CD4-positive, alpha-beta memory T cell (primary cell): ENCODE measurements at regions of chr17 and their contacts with region 1.

Region 1: GRCh38 chr17:19377602-19378392 is 501 bp upstream of the MAPK7 start:
- DNase-seq: peak; percentile 94 to 96 (median 95)
- H3K4me3 ChIP-seq: peak overlapping the region; percentile 96 to 98
- H3K4me3 Mint-ChIP-seq: peak overlapping the region; percentile 94 to 100 (median 99)
- H3K27ac ChIP-seq: peak overlapping the region; percentile 91
- H3K27ac Mint-ChIP-seq: peak overlapping the region; percentile 91 to 99 (median 98)
- H3K4me1 ChIP-seq: peaks cover 19% of the 10 kb centered on the region
- H3K4me1 Mint-ChIP-seq: peaks cover 12 to 49% (median 18%) of the 10 kb centered on the region in 4 donors
- H3K27me3 ChIP-seq: no peaks in the 10 kb centered on the region
- H3K27me3 Mint-ChIP-seq: no peaks in the 10 kb centered on the region

Region 2: GRCh38 chr17:19418251-19418992 is 40.6 kb after region 1 on chr17:
- CTCF ChIA-PET with region 1: no interaction called
- POLR2A ChIA-PET with region 1: no interaction called
- intact Hi-C with region 1: no loop called
- DNase-seq: peak in 2 of 5 donors; percentile 6 to 12
- H3K4me3 ChIP-seq: no peak overlapping the region
- H3K4me3 Mint-ChIP-seq: no peak overlapping the region
- H3K27ac ChIP-seq: no peak overlapping the region
- H3K27ac Mint-ChIP-seq: peak overlapping the region in 6 of 7 donors; percentile 22 to 78 (median 65)
- H3K4me1 ChIP-seq: peaks cover 4% of the 10 kb centered on the region
- H3K4me1 Mint-ChIP-seq: peaks cover 2 to 20% (median 9%) of the 10 kb centered on the region in 4 donors
- H3K27me3 ChIP-seq: no peaks in the 10 kb centered on the region
- H3K27me3 Mint-ChIP-seq: no peaks in the 10 kb centered on the region

Region 3: DNA sequence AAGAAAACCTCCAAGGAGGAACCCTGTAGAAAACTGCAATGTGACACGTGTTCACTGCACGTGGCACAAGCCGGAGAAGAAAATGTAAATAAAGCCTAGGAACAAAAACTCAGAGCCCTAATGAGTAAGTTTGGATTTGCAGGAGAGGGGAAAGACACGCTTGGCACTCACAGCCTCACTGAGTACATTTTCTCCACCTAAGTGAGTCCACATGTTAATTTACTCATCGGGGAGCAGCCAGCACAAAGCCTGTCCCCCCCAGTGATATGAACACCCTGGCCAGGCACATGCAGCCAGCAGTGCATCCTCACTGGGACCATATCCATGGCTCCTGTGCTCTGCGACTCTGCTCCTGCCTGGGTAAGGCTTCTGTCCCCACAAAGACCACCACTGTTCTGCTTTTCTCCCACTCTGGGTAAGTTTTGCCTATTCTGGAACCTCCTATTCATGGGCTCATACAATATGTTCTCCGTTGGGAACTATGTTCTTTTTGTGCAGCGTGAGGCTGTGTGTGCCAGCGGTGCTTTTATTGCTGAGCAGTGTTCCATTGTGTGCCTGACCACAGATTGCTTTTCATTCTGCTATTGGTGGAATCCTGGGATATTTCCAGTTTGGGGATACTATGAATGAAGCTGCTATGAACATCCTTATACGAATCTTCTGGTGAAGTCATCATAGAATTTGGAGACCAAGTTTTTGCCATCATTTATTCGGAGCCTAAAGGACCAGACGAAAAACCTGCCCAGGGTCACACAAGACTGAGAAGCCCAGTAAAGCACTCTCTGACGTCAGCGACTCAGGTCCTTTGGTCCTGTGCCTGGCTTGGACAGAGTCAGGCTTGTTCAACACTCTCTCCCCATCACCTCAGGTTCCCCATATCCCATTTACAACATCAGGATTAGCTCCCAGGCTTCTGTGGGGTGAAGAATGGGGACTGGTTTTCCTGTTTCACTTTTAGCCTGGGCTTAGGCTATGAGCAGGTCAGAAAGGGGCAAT is 86.5 kb after region 1 on chr17:
- CTCF ChIA-PET with region 1: interaction called, 3 read pairs
- POLR2A ChIA-PET with region 1: interaction called, 10 read pairs
- intact Hi-C with region 1: no loop called
- DNase-seq: no peak
- H3K4me3 ChIP-seq: no peak overlapping the region
- H3K4me3 Mint-ChIP-seq: peak overlapping the region in 6 of 8 donors; percentile 21 to 73 (median 48)
- H3K27ac ChIP-seq: no peak overlapping the region
- H3K27ac Mint-ChIP-seq: peak overlapping the region; percentile 8 to 93 (median 85)
- H3K4me1 ChIP-seq: peaks cover 34% of the 10 kb centered on the region
- H3K4me1 Mint-ChIP-seq: peaks cover 17 to 53% (median 34%) of the 10 kb centered on the region in 4 donors
- H3K27me3 ChIP-seq: no peaks in the 10 kb centered on the region
- H3K27me3 Mint-ChIP-seq: no peaks in the 10 kb centered on the region

Region 4: DNA sequence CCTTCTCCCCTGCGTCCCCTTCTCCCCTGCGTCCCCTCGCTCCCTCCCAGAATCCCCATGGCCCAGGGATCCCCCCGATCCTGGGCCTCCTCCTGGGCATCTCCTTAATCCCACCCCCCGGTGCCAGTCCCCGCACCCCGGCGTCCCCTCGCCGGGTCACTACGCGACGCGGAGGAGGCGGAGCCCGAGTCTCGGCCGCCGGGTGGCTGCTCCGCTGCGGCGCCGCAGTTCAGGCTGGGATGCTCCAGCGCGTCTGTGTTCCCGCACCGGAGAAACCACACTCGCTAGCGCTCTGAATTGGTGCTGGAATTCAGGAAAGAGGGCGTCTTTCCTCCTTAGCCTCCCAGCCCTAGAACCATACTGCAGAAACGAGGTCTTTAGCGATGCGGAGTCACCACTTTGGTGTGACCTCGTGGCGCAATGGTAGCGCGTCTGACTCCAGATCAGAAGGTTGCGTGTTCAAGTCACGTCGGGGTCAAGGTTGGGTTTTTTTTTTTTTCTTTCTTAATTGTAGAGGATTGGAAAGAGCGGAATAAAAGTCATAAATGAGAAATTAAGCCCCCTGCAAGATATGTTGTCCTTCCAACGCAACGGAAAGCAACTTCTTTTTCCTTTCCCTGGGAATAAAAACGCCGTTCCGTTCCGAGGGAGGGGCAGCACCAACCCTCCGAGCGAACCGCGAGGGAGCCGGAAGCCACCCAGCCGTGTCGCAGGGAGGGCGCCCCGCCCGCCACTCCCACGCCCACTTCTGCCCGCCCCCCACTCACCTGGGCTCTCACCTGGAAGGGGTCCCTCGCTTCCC is 130.2 kb after region 1 on chr17:
- CTCF ChIA-PET with region 1: interaction called, 4 read pairs
- POLR2A ChIA-PET with region 1: no interaction called
- intact Hi-C with region 1: loop called (anchors 5 kb)
- DNase-seq: peak; percentile 86 to 90 (median 88)
- H3K4me3 ChIP-seq: peak overlapping the region; percentile 91 to 95
- H3K4me3 Mint-ChIP-seq: peak overlapping the region; percentile 87 to 98 (median 93)
- H3K27ac ChIP-seq: peak overlapping the region; percentile 61
- H3K27ac Mint-ChIP-seq: peak overlapping the region; percentile 86 to 99 (median 98)
- H3K4me1 ChIP-seq: peaks cover 5% of the 10 kb centered on the region
- H3K4me1 Mint-ChIP-seq: peaks cover 5 to 12% (median 9%) of the 10 kb centered on the region in 4 donors
- H3K27me3 ChIP-seq: no peaks in the 10 kb centered on the region
- H3K27me3 Mint-ChIP-seq: peaks cover 1 to 5% of the 10 kb centered on the region in 2 donors